ENCODE measurements at regions of chr3 and their contacts with region 1.

Region 1: GRCh38 chr3:112814266-112814665 is 32.4 kb downstream of the CD200R1L start:
- H3K4me3 Mint-ChIP-seq: peak overlapping the region; percentile 30
- H3K27ac Mint-ChIP-seq: peak overlapping the region; percentile 94
- H3K4me1 Mint-ChIP-seq: peaks cover 84% of the 10 kb centered on the region
- H3K27me3 Mint-ChIP-seq: no peaks in the 10 kb centered on the region

Region 2: DNA sequence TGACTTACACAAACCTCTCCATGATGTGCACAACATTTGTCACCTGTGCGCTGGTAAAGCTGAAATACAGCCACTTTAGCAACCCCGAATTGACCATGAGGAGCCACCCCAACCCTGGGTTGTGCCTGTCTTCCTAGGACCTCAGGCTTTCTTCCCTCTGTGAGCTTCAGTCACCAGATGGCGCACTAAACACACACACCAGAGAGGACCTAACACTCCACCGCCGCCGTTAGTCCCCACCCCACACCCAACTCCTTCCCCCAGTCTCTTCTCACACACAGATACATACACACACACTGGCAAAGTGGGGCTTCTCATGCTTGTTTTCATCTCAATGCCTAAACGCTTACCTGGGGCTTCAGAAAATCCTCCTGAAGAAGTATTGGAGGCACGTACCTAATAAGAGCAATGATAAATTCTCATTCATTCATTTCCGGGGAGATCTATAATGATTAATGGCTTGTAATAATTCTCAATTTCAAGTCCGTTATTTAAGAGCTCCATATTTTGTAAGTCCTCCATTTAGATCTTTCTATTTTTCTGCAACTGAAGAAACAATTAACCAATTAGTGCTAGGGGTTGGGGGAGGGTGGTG is 171.3 kb before region 1 on chr3:
- intact Hi-C with region 1: loop called (anchors 5 kb)
- H3K4me3 Mint-ChIP-seq: peak overlapping the region; percentile 58
- H3K27ac Mint-ChIP-seq: peak overlapping the region; percentile 20
- H3K4me1 Mint-ChIP-seq: peaks cover 29% of the 10 kb centered on the region
- H3K27me3 Mint-ChIP-seq: peaks cover 17% of the 10 kb centered on the region

Region 3: DNA sequence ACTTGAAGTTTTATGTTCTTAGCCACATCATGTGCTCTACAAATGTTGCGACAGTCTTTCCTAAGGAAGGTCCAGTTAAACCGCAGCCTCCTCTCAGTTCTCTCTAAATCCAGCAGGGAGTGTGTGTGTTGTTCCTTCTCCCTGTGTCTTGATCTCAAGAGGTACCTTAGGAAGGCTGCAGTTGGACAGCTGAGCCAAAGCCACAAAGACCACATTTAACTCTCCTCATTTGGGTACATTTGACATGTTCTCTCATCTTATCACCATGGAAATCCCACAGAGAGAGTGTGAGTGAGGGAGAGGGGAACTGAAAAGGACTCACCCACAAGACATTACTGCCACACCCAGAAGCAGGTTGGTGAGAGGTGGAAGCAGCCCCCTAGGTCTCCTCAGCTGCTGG is 47.1 kb before region 1 on chr3:
- intact Hi-C with region 1: loop called (anchors 5 kb)
- H3K4me3 Mint-ChIP-seq: no peak overlapping the region
- H3K27ac Mint-ChIP-seq: peak overlapping the region; percentile 92
- H3K4me1 Mint-ChIP-seq: peaks cover 75% of the 10 kb centered on the region
- H3K27me3 Mint-ChIP-seq: no peaks in the 10 kb centered on the region

Region 4: GRCh38 chr3:112948346-112948838 is 134.1 kb after region 1 on chr3:
- intact Hi-C with region 1: no loop called
- H3K4me3 Mint-ChIP-seq: no peak overlapping the region
- H3K27ac Mint-ChIP-seq: no peak overlapping the region
- H3K4me1 Mint-ChIP-seq: peaks cover 48% of the 10 kb centered on the region
- H3K27me3 Mint-ChIP-seq: no peaks in the 10 kb centered on the region

Region 5: DNA sequence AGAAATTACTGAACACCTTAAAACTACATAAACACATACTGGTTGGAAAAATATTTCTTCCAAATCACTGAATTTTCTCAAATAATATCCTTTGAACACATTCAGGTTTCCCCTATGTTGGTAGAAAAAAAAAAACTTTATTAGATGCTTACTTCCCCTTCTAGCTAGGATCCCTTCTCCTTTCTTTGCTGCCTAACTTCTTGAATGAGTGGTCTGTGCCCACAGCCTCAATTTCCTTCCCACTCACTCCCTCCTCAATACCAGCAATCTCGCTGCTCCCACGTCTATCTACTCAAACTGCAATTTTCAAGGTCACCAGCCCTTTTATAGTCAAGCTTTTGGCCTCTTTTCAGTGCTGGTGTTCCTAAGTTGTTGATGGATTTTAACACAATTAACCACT is 152.4 kb after region 1 on chr3:
- intact Hi-C with region 1: loop called (anchors 5 kb)
- H3K4me3 Mint-ChIP-seq: peak overlapping the region; percentile 74
- H3K27ac Mint-ChIP-seq: peak overlapping the region; percentile 89
- H3K4me1 Mint-ChIP-seq: peaks cover 90% of the 10 kb centered on the region
- H3K27me3 Mint-ChIP-seq: no peaks in the 10 kb centered on the region

Measured in dendritic cell treated with granulocyte-macrophage colony-stimulating factor and Interleukin-4, amounts not matched to agents 40 ng/mL and 50 ng/mL, for 4 days (primary cell).